Common myeloid progenitor, CD34-positive (primary cell): ENCODE measurements at regions of chr3 and their contacts with region 1.

Region 1: GRCh38 chr3:108538083-108538482 is 27.7 kb upstream of the MYH15 start:
- DNase-seq: no peak
- H3K4me3 ChIP-seq: no peak overlapping the region
- H3K27ac ChIP-seq: no peak overlapping the region
- H3K4me1 ChIP-seq: no peaks in the 10 kb centered on the region
- H3K27me3 ChIP-seq: no peaks in the 10 kb centered on the region

Region 2: GRCh38 chr3:108552267-108553159 is 14.4 kb after region 1 on chr3:
- CTCF ChIA-PET with region 1: interaction called, 16 read pairs
- POLR2A ChIA-PET with region 1: no interaction called
- DNase-seq: peak; percentile 63 to 79 (median 70)
- H3K4me3 ChIP-seq: no peak overlapping the region
- H3K27ac ChIP-seq: no peak overlapping the region
- H3K4me1 ChIP-seq: no peaks in the 10 kb centered on the region
- H3K27me3 ChIP-seq: no peaks in the 10 kb centered on the region